Upper lobe of right lung (tissue), 1 donor: ENCODE measurements at regions of chr12 and their contacts with region 1.

Region 1: GRCh38 chr12:47715393-47715876 is 9.6 kb upstream of the RPAP3 start:
- DNase-seq: peak; percentile 70
- ATAC-seq: peak; percentile 77
- H3K4me3 ChIP-seq: no peak overlapping the region
- H3K27ac ChIP-seq: peak overlapping the region; percentile 48
- H3K4me1 ChIP-seq: peaks cover 34% of the 10 kb centered on the region
- H3K27me3 ChIP-seq: no peaks in the 10 kb centered on the region
- CTCF ChIP-seq: peak; percentile 78

Region 2: DNA sequence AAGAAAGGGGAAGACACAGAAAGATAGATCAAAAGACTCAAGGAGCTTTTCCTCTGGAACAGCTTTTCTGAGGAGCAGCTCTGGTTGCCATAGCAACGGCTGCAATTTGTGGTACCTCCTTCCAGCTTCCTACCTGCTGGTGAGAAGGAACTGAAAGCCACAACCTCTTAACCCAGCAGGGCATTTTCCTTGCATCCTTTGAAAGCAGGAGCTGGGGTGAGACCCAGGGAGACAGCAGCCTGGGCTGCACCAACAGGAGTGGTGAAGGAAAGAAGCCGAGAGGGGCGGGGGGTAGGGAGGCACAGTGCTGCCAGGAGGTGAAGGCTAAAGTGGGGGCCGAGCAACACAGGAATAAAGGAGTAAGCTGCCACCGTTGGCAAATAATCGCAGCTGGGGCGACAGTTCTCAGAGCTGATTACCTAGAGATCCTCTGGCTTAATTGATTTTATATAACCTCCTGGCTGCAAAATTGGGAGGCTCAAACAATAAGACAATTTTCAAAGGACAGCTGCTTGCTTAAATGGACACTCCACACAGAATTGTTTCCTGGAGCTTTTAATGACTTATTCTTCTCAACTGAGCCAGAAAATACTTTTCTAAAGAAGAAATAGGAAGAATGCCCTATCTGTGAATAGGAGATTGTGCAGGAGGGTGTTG is 139.0 kb before region 1 on chr12:
- intact Hi-C with region 1: no loop called
- DNase-seq: no peak
- ATAC-seq: no peak
- H3K4me3 ChIP-seq: no peak overlapping the region
- H3K27ac ChIP-seq: no peak overlapping the region
- H3K4me1 ChIP-seq: no peaks in the 10 kb centered on the region
- H3K27me3 ChIP-seq: no peaks in the 10 kb centered on the region
- CTCF ChIP-seq: no peak

Region 3: GRCh38 chr12:47779301-47779942 is 64.0 kb after region 1 on chr12:
- intact Hi-C with region 1: loop called (anchors 5 kb)
- DNase-seq: peak; percentile 92
- ATAC-seq: peak; percentile 82
- H3K4me3 ChIP-seq: no peak overlapping the region
- H3K27ac ChIP-seq: no peak overlapping the region
- H3K4me1 ChIP-seq: peaks cover 45% of the 10 kb centered on the region
- H3K27me3 ChIP-seq: no peaks in the 10 kb centered on the region
- CTCF ChIP-seq: peak; percentile 98

Region 4: GRCh38 chr12:47837190-47838171 is 122.0 kb after region 1 on chr12:
- intact Hi-C with region 1: loop called (anchors 10 kb)
- DNase-seq: peak; percentile 78
- ATAC-seq: peak; percentile 84
- H3K4me3 ChIP-seq: no peak overlapping the region
- H3K27ac ChIP-seq: peak overlapping the region; percentile 30
- H3K4me1 ChIP-seq: peaks cover 14% of the 10 kb centered on the region
- H3K27me3 ChIP-seq: no peaks in the 10 kb centered on the region
- CTCF ChIP-seq: peak; percentile 93

Region 5: GRCh38 chr12:48054955-48055821 is 339.8 kb after region 1 on chr12:
- intact Hi-C with region 1: no loop called
- DNase-seq: no peak
- ATAC-seq: no peak
- H3K4me3 ChIP-seq: no peak overlapping the region
- H3K27ac ChIP-seq: no peak overlapping the region
- H3K4me1 ChIP-seq: no peaks in the 10 kb centered on the region
- H3K27me3 ChIP-seq: no peaks in the 10 kb centered on the region
- CTCF ChIP-seq: no peak